Activated T-helper 1 cell treated with anti-CD3 and anti-CD28 coated beads, Interleukin-12 subunit alpha, Interleukin-12 subunit beta, Interleukin-2, Interleukin-4 antibody, amounts not matched to agents 30 ng/mL and 10 ng/mL and 1 ng/mL, durations not matched to agents 14 hours and 24 hours and 36 hours (primary cell): ENCODE measurements at regions of chr3 and their contacts with region 1.

Region 1: DNA sequence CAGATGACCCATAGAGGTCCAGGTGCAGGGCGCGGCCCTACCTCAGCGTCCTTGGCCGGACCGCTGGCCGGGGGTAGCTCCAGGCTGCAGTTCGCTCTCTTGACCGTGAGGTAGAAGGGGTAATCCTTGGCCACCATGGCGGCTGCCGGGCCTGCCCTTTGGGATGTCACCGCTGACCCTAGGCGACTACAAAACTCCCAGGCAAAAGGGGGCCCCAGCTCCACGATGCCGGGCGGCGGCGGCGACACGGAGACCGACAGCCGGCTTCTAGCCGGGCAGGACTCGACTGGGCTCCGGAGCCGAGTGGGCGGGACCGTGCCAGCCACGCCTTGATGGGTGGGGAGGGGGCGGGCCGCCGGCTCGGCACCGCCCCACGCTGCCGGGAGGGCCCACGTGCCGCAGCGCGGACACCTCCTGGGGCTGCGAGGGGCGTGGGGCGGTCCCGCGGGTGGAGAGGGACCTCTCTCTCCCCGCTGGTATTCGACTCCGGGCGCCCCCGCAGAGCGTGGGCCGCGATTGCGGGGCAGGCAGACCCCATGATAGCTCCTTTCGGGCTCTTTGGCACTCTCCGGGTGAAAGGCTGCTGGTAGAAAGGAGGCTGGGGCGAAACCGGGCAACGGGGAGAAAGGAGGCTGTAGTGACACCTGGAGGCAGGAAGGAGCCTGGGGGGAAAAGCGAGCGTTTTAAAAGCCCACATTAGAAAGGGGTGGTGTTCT is at the start of gene ARHGEF3:
- DNase-seq: peak; percentile 77
- H3K4me3 Mint-ChIP-seq: peak within 1 kb of the TSS; percentile 95
- H3K27ac Mint-ChIP-seq: peak within 1 kb of the TSS; percentile 92
- H3K4me1 Mint-ChIP-seq: peaks cover 51% of the 10 kb centered on the region
- H3K27me3 Mint-ChIP-seq: no peaks in the 10 kb centered on the region
- total RNA-seq, gene ARHGEF3: 59.2 and 64.1 TPM in 2 replicates

Region 2: DNA sequence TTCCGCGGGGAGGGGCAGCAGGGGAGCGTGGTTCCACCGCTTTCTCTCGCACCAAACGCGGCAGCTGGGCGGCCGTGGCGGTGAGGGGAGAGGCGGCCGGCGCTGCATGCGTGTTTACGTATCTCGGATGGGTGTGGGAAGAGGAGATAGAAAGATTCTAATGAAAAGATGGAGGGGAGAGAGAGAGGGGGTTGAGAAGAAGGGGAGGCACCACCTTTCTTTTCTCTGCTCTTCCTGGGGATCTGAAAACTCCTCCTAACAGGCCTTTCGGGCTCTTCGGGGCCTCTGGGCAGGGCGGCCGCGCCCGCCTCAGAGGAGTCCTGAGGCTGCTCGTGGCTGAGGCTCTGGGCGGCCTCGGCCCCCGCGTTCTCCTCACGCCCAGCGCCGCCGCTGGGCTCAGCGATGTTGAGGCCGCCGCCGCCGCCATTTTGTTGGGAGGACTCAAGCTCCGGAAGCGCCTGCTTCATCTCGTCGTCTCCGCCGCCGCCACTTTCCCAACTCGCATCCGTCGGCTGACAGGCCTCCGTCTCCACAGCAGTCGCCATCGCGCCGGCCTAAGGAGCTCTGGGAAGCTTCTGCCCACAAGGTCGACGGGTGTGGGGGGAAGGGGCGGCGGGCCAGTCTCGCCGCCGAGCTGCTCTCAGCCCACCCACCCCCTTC is 119.2 kb before region 1 on chr3:
- intact Hi-C with region 1: loop called (anchors 1 kb)
- DNase-seq: peak; percentile 77
- H3K4me3 Mint-ChIP-seq: peak overlapping the region; percentile 97
- H3K27ac Mint-ChIP-seq: peak overlapping the region; percentile 96
- H3K4me1 Mint-ChIP-seq: peaks cover 45% of the 10 kb centered on the region
- H3K27me3 Mint-ChIP-seq: peaks cover 2% of the 10 kb centered on the region

Region 3: DNA sequence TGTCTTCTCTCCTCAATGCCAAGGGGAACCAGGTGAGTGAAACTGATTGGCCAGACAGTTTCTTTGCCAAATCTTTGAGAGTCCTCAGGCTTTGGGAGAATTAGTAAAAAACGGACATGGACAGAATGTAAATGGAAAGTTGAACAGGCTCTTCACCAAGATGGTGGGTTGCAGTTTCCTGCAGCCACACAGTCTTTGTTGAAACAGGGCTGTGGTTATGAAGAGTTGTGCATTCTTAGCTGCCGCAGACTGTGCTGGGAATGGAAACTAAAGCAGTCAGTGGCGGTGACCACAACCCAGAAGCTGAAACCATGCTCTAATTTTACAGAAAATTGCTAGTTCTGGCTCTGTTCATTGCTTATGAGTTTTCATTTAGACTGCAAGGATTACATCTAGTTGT is 76.6 kb before region 1 on chr3:
- intact Hi-C with region 1: loop called (anchors 1 kb)
- DNase-seq: peak; percentile 68
- H3K4me3 Mint-ChIP-seq: peak overlapping the region; percentile 81
- H3K27ac Mint-ChIP-seq: peak overlapping the region; percentile 93
- H3K4me1 Mint-ChIP-seq: peaks cover 69% of the 10 kb centered on the region
- H3K27me3 Mint-ChIP-seq: no peaks in the 10 kb centered on the region

Region 4: DNA sequence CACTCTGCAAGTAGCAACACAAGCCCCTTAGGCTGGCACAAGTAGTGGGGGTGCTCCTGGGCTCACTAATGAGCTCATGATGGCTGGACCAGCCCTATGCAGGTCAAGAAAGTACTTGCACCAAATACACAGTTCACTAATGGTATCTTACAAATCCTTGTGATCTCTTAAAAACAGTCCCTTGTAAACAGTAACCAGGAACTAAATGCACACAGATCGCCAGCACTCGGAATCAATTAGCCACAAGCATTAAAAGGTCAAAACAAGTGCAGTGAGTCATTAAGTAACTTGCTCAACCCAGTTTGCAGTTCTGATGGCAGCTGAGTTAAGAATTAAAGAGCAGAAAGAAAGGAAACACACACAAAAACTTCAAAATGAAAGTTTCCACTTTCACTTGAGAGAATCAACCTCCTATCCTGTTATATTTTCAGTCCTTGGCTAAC is 43.3 kb before region 1 on chr3:
- intact Hi-C with region 1: loop called (anchors 1 kb)
- DNase-seq: peak; percentile 9
- H3K4me3 Mint-ChIP-seq: peak overlapping the region; percentile 53
- H3K27ac Mint-ChIP-seq: peak overlapping the region; percentile 79
- H3K4me1 Mint-ChIP-seq: peaks cover 81% of the 10 kb centered on the region
- H3K27me3 Mint-ChIP-seq: no peaks in the 10 kb centered on the region

Region 5: DNA sequence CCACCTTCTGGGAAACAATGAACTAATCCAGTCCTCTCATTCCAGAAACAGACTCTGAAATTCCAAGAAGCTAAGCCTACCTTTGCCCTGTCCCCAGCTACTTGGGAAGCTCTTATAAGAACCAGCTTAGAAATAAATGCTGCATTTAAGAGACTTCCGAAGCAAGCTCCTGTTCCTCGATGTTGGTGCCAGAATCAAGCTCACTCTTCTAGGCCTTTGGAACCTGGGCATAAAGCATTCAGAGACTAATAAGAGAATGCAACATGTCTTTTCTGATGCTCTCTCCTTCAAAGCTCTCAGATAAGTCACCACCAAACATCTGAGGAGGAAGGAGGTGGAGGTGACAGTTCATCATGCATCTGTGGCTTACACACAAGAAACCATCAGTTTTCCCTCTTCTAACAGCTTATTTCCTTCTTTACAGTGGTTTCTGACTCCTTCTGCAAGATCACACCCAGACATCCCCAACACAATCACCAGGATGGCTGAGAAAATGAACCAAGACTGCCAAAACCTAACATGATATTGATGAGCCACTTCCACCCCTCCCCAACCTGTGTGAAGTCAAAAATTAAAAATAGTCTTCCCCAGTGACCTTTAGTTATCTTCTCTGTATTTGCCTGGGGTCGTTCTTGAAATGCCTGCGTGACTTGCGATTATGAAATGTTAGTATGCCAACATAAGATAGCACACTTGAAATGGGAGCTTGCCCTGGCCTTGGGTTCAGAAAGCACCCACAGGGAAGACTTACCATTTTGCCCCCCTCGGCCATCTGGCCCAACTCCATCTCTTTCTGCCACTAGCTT is 11.6 kb before region 1 on chr3:
- intact Hi-C with region 1: loop called (anchors 1 kb)
- DNase-seq: peak; percentile 35
- H3K4me3 Mint-ChIP-seq: peak overlapping the region; percentile 70
- H3K27ac Mint-ChIP-seq: peak overlapping the region; percentile 89
- H3K4me1 Mint-ChIP-seq: peaks cover 86% of the 10 kb centered on the region
- H3K27me3 Mint-ChIP-seq: no peaks in the 10 kb centered on the region

Region 6: DNA sequence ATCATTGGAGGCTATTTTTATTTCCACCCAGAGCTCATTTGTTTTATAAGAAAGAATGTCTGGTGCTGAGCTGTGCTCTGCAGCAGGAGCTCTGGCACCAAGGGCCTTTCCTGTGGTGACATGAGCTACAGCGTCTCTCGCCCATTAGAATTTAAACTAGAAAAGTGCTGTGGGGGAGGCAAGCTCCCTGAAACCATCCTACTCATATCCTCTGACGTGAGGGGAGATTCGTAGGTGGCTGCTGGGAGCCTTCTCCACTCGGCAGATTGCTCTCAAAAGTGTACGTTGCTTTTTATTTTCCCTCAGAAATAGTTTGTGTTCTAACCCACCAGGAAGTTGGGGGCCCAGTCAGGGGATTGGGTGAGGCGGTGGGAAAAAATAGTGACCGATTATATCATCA is 76.3 kb after region 1 on chr3:
- intact Hi-C with region 1: loop called (anchors 1 kb)
- DNase-seq: peak; percentile 14
- H3K4me3 Mint-ChIP-seq: peak overlapping the region; percentile 72
- H3K27ac Mint-ChIP-seq: peak overlapping the region; percentile 92
- H3K4me1 Mint-ChIP-seq: peaks cover 76% of the 10 kb centered on the region
- H3K27me3 Mint-ChIP-seq: no peaks in the 10 kb centered on the region

Region 7: DNA sequence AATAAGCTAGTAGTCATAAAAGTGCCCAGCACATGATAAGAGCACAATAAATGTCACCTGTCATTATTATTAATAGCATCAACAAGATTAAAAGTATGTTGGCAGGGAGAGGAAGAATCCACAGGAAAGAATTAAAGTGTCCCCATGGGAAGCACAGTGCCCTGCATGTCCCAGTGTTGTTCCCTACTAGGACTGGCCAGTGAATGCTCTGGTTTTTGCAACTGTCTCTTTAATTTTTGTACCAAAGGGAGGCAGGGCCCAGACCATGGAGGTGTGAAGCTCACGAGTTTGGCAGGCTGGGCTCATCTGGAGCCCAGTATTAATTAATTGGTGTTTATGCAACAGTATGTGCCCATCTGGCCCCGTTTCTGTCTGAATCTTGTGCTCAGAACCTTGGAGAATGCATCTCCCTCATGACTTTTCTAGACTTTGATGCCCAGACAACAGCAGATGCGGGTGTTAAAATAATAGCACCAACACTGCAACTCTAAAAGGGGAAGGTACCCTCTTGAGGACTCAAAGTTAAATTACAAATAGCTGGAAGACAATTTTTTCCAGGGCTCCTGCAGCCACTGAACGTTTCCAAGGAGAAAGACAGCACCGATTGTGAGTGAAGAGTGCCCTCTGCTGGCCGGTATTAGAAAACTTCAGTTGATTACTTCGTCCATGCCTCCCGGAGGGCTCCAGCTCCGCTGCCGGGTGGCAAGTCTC is 186.8 kb after region 1 on chr3:
- intact Hi-C with region 1: loop called (anchors 1 kb)
- DNase-seq: peak; percentile 46
- H3K4me3 Mint-ChIP-seq: no peak overlapping the region
- H3K27ac Mint-ChIP-seq: no peak overlapping the region
- H3K4me1 Mint-ChIP-seq: peaks cover 27% of the 10 kb centered on the region
- H3K27me3 Mint-ChIP-seq: peaks cover 14% of the 10 kb centered on the region